ENCODE measurements at regions of chrX and their contacts with region 1.

Region 1: GRCh38 chrX:123960042-123960611 is 1.4 kb upstream of the STAG2 start:
- DNase-seq: peak; percentile 95
- H3K4me3 ChIP-seq: peak overlapping the region; percentile 71 to 81 (median 74)
- H3K27ac ChIP-seq: peak overlapping the region; percentile 96 to 98 (median 97)
- H3K4me1 ChIP-seq: peaks cover 8 to 23% (median 9%) of the 10 kb centered on the region in 4 donors
- H3K27me3 ChIP-seq: no peaks in the 10 kb centered on the region
- CTCF ChIP-seq: peak; percentile 78 to 90 (median 86)
- EP300 ChIP-seq: no peak
- POLR2A ChIP-seq: peak; percentile 69

Region 2: GRCh38 chrX:123833387-123833786 is 126.7 kb before region 1 on chrX:
- intact Hi-C with region 1: loop called (anchors 5 kb)
- DNase-seq: no peak
- H3K4me3 ChIP-seq: no peak overlapping the region
- H3K27ac ChIP-seq: no peak overlapping the region
- H3K4me1 ChIP-seq: peaks cover 0 to 3% (median 0%) of the 10 kb centered on the region in 4 donors
- H3K27me3 ChIP-seq: no peaks in the 10 kb centered on the region
- CTCF ChIP-seq: peak; percentile 68 to 70 (median 68)
- EP300 ChIP-seq: no peak
- POLR2A ChIP-seq: no peak

Region 3: GRCh38 chrX:123975180-123975579 is 15.1 kb after region 1 on chrX:
- intact Hi-C with region 1: loop called (anchors 2 kb)
- DNase-seq: no peak
- H3K4me3 ChIP-seq: peak overlapping the region in 1 of 4 donors; percentile 31
- H3K27ac ChIP-seq: peak overlapping the region; percentile 34 to 78 (median 69)
- H3K4me1 ChIP-seq: peaks cover 5 to 89% (median 64%) of the 10 kb centered on the region in 4 donors
- H3K27me3 ChIP-seq: no peaks in the 10 kb centered on the region
- CTCF ChIP-seq: no peak
- EP300 ChIP-seq: no peak
- POLR2A ChIP-seq: no peak

Measured in esophagus muscularis mucosa (tissue), 4 donors.